Sigmoid colon (tissue), 7 donors: ENCODE measurements at regions of chr3 and their contacts with region 1.

Region 1: DNA sequence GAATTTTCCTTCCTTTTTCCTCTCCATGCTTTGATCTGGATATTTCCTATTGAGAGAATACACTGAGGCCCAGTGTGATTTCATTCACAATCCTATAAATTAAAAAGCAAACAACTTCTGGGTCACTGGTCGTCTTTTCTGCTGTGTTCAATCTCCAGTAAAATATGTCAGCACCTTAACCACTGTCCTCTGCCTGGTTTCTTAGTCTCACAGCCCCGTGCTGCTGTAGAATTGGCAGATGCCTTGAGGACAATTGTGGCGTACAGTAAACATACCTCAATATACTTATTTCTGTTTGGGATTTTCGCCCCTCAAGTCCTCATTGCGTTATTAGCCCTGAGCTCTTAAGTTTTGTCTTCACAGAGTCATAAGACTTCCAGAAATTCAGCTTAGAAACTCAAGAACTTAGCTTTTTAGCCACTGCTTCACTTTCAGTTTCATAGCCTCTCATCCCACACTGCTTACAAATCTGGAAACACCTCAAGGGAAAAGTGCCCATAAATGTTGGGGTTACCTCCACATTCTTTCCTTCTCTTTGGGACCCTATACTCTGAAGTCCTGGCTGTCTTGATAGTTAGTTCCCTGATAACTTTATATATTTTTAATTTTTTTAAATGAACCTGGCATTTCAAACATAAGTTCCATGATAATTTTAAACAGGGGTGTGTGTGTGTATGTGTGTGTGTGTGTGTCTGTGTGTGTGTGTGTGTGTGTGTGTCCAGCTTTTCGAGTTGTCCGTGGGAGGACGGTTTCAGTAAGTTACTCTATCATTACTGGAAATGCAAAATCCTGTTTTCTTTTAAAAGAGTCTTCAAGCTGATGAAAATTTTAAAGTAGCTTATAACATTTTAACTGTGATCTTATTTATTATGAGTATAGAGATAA is 238.4 kb upstream of the CTDSPL start:
- DNase-seq: no peak
- H3K4me3 ChIP-seq: peak overlapping the region in 3 of 4 donors; percentile 19 to 34 (median 29)
- H3K27ac ChIP-seq: peak overlapping the region; percentile 47 to 72 (median 62)
- H3K4me1 ChIP-seq: peaks cover 0 to 52% (median 45%) of the 10 kb centered on the region in 4 donors
- H3K27me3 ChIP-seq: no peaks in the 10 kb centered on the region
- CTCF ChIP-seq: no peak
- EP300 ChIP-seq: no peak
- POLR2A ChIP-seq: no peak

Region 2: GRCh38 chr3:37129871-37130270 is 493.4 kb before region 1 on chr3:
- intact Hi-C with region 1: no loop called
- DNase-seq: no peak
- H3K4me3 ChIP-seq: no peak overlapping the region
- H3K27ac ChIP-seq: no peak overlapping the region
- H3K4me1 ChIP-seq: peaks cover 0 to 10% (median 7%) of the 10 kb centered on the region in 4 donors
- H3K27me3 ChIP-seq: no peaks in the 10 kb centered on the region
- CTCF ChIP-seq: no peak
- EP300 ChIP-seq: no peak
- POLR2A ChIP-seq: no peak

Region 3: GRCh38 chr3:37661615-37662306 is 38.5 kb after region 1 on chr3:
- intact Hi-C with region 1: loop called (anchors 5 kb)
- DNase-seq: peak; percentile 94
- H3K4me3 ChIP-seq: no peak overlapping the region
- H3K27ac ChIP-seq: peak overlapping the region; percentile 30 to 82 (median 67)
- H3K4me1 ChIP-seq: peaks cover 0 to 40% (median 39%) of the 10 kb centered on the region in 4 donors
- H3K27me3 ChIP-seq: no peaks in the 10 kb centered on the region
- CTCF ChIP-seq: no peak
- EP300 ChIP-seq: peak in 3 of 4 donors; percentile 20 to 52 (median 25)
- POLR2A ChIP-seq: no peak